Right cardiac atrium (tissue), 5 donors: ENCODE measurements at regions of chr18 and their contacts with region 1.

Region 1: GRCh38 chr18:13726232-13726971 is at the starts of genes FAM210A and RNMT:
- DNase-seq: peak; percentile 97 to 99 (median 99)
- ATAC-seq: peak; percentile 98
- H3K4me3 ChIP-seq: peak within 1 kb of the TSS; percentile 74
- H3K27ac ChIP-seq: peak within 1 kb of the TSS; percentile 87
- H3K4me1 ChIP-seq: no peaks in the 10 kb centered on the region
- H3K27me3 ChIP-seq: no peaks in the 10 kb centered on the region
- total RNA-seq, gene FAM210A: 40.1 to 66.5 (median 48.1) TPM
- total RNA-seq, gene RNMT: 27.8 to 40.1 (median 34.5) TPM

Region 2: GRCh38 chr18:13191779-13192178 is 534.6 kb before region 1 on chr18:
- intact Hi-C with region 1: no loop called
- DNase-seq: peak in 2 of 3 donors; percentile 66 to 76
- ATAC-seq: peak in 1 of 2 donors; percentile 79
- H3K4me3 ChIP-seq: no peak overlapping the region
- H3K27ac ChIP-seq: no peak overlapping the region
- H3K4me1 ChIP-seq: no peaks in the 10 kb centered on the region
- H3K27me3 ChIP-seq: no peaks in the 10 kb centered on the region

Region 3: GRCh38 chr18:13558124-13558523 is 168.3 kb before region 1 on chr18:
- intact Hi-C with region 1: loop called in 2 of 4 experiments (anchors 10 kb)
- DNase-seq: peak; percentile 56 to 78 (median 76)
- ATAC-seq: peak; percentile 80 to 84
- H3K4me3 ChIP-seq: no peak overlapping the region
- H3K27ac ChIP-seq: peak overlapping the region; percentile 58
- H3K4me1 ChIP-seq: peaks cover 8% of the 10 kb centered on the region
- H3K27me3 ChIP-seq: no peaks in the 10 kb centered on the region

Region 4: DNA sequence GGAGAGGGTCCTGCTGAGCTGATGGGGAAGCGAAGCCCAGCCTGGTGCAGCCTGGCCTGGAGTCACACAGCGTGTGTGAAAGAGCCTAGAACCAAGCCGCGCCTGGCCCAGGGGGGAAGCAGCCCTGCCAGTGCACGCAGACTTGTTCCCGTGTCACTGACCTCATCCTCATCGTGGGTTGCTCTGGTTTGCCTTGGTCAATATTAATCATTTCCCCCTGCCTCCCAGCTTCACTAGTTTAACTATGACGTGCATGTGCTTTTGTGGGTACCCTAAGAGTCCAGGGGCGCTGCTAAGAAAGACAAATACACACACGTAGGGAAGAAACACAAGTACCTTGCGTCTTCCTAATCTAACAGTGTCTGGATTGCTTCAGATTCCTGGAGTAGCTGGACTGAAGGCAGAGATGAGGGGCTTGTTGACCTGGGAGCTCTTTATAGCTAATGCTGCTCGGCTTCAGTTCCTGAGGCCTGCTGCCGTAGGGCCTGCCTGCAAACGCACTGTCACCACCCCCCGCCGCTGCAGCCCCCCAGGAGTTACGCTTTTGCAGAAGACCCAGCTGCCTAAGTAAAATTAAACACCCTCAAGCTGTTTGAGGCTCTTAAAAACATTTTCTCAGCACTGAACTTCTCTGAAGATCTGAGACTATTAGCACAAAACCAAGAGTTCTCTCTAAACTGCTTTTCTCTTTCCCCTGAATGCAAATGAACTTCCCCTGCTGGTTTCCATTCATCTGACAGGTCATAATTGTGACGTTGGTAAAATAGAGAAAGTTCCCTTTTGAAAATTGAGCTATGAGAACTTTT is 159.3 kb before region 1 on chr18:
- intact Hi-C with region 1: loop called in 1 of 4 experiments (anchors 10 kb)
- DNase-seq: peak; percentile 69 to 77 (median 70)
- ATAC-seq: peak; percentile 3 to 12
- H3K4me3 ChIP-seq: no peak overlapping the region
- H3K27ac ChIP-seq: peak overlapping the region; percentile 53
- H3K4me1 ChIP-seq: peaks cover 14% of the 10 kb centered on the region
- H3K27me3 ChIP-seq: no peaks in the 10 kb centered on the region

Region 5: DNA sequence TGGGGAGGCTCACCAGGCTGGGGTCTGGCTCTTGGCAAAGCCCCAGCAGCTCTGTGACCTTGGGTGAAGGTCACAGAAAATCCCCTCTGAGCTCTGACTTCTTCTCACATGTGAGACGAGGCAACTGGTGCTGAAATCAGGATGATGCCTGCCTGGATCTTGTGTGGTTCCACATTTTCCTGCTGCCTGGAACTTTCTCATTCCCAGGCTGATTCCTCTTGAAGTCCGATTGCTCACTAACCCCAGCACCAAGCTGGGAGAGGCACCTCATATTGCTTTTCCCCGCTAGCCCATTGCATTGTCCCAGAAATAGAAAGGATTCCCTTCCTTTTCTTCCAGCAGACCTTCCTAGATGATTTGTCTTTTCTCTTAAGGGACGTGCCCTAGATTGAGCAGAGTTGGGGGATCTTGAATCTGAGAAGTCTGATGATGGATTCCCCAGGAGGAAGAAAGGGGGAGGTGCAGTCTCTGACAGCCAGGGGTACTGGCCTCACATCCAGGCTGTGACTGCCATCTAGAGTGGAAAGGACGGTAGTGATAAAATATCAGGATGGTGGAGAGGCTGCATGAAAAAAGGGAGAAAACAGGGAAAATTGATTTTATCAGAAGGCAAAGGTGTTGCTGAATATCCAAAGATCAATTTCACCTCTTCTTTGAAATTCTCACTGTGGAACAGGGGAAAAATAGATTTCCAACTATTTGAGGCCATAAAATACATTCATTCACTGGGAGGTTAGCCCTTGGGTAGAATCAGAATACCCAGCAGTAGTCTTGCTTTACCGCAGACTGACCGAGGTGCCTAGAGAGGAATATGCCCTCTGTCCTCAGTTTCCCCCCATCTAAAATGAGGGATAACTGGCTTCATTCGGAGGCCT is 96.3 kb before region 1 on chr18:
- intact Hi-C with region 1: loop called in 1 of 4 experiments (anchors 10 kb)
- DNase-seq: peak in 2 of 3 donors; percentile 46 to 81
- ATAC-seq: peak; percentile 84 to 87
- H3K4me3 ChIP-seq: no peak overlapping the region
- H3K27ac ChIP-seq: peak overlapping the region; percentile 29
- H3K4me1 ChIP-seq: no peaks in the 10 kb centered on the region
- H3K27me3 ChIP-seq: no peaks in the 10 kb centered on the region